ENCODE measurements at regions of chr17 and their contacts with region 1.

Region 1: DNA sequence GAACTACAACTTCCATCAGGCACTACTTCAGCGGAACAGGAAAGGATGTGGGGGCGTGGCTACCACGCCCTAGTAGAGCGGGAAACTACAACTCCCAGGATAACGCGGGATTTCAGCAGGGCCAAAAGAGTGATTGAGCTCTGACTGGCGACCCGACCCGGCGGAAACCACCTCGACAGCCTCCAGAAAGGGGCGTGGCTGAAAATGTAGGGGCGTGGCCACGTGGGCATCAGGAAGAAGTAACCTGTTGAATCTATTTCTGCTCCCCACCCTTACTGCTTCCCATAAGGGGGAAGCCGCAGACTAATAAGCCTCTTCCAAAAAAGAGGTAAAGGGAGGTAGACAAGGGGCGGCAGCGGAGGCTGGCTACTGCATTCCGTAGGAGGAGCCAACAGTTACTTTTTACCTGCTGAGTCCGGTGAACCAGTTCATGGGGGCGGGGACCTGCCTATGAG is at the start of gene TMEM102:
- DNase-seq: peak; percentile 93 to 96
- ATAC-seq: peak; percentile 76 to 92 (median 88)
- H3K4me3 ChIP-seq: peak within 1 kb of the TSS; percentile 16 to 66 (median 51)
- H3K27ac ChIP-seq: peak within 1 kb of the TSS in 9 of 10 donors; percentile 14 to 78 (median 57)
- H3K4me1 ChIP-seq: peaks cover 24 to 56% (median 46%) of the 10 kb centered on the region in 9 donors
- H3K27me3 ChIP-seq: peaks cover 0 to 23% (median 6%) of the 10 kb centered on the region in 7 donors
- CTCF ChIP-seq: no peak
- total RNA-seq, gene TMEM102: 1.2 to 3.5 (median 2.2) TPM

Region 2: GRCh38 chr17:7454980-7455379 is 19.7 kb after region 1 on chr17:
- intact Hi-C with region 1: loop called in 1 of 10 experiments (anchors 1 kb)
- DNase-seq: no peak
- ATAC-seq: peak in 1 of 8 donors; percentile 6
- H3K4me3 ChIP-seq: peak overlapping the region in 8 of 10 donors; percentile 51 to 93 (median 80)
- H3K27ac ChIP-seq: peak overlapping the region in 4 of 10 donors; percentile 80 to 89 (median 82)
- H3K4me1 ChIP-seq: peaks cover 0 to 13% (median 0%) of the 10 kb centered on the region in 9 donors
- H3K27me3 ChIP-seq: no peaks in the 10 kb centered on the region
- CTCF ChIP-seq: no peak

Region 3: GRCh38 chr17:7484067-7484918 is 49.0 kb after region 1 on chr17 and contains the start of gene POLR2A:
- intact Hi-C with region 1: loop called in 8 of 10 experiments (anchors 1 to 5 kb)
- DNase-seq: peak; percentile 98 to 99
- ATAC-seq: peak; percentile 84 to 93 (median 88)
- H3K4me3 ChIP-seq: peak within 1 kb of the TSS; percentile 55 to 87 (median 68)
- H3K27ac ChIP-seq: peak within 1 kb of the TSS; percentile 91 to 100 (median 100)
- H3K4me1 ChIP-seq: peaks cover 22 to 78% (median 60%) of the 10 kb centered on the region in 9 donors
- H3K27me3 ChIP-seq: no peaks in the 10 kb centered on the region
- CTCF ChIP-seq: no peak
- total RNA-seq, gene POLR2A: 40.5 to 61.7 (median 48.8) TPM

Region 4: GRCh38 chr17:7583253-7584109 is 148.2 kb after region 1 on chr17 and contains the start of gene MPDU1:
- intact Hi-C with region 1: loop called in 2 of 10 experiments (anchors 5 to 10 kb)
- DNase-seq: peak; percentile 97
- ATAC-seq: peak; percentile 81 to 96 (median 90)
- H3K4me3 ChIP-seq: peak within 1 kb of the TSS; percentile 10 to 75 (median 66)
- H3K27ac ChIP-seq: peak within 1 kb of the TSS; percentile 90 to 97 (median 94)
- H3K4me1 ChIP-seq: peaks cover 9 to 76% (median 48%) of the 10 kb centered on the region in 9 donors
- H3K27me3 ChIP-seq: no peaks in the 10 kb centered on the region
- CTCF ChIP-seq: no peak
- total RNA-seq, gene MPDU1: 20.1 to 39.8 (median 23.5) TPM

Region 5: DNA sequence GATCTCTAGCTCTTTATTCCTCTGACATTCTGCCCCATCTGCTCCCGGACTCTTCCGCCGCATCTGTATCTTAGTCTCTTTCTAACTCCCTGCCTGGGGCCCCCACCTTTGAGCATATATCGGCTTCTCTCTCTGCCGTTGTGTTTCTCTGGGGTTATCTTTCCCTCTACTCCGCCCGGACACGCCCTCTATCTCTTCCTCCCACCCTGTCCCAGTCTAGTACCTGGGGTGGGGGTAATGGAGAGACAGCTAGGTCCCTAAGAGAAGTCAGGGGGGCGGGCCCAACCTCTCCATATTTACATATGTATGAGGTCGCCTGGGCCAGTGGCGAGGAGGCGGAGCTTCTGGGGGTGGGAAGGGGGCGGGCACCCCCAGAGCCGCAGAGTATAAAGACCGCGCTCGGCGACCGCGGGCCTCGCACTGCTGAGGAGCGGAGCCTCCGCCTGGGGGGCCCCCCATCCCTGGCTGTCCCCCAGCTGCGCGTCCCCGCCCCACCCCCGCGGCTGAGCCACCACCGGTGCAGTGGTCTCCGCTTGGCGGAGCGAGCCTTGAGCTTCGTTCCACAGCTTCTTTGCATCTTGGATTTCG is 215.4 kb after region 1 on chr17 and contains the start of gene ATP1B2:
- intact Hi-C with region 1: no loop called
- DNase-seq: peak; percentile 68 to 76
- ATAC-seq: peak; percentile 72 to 90 (median 84)
- H3K4me3 ChIP-seq: peak within 1 kb of the TSS; percentile 8 to 66 (median 58)
- H3K27ac ChIP-seq: peak within 1 kb of the TSS; percentile 47 to 78 (median 62)
- H3K4me1 ChIP-seq: peaks cover 6 to 23% (median 19%) of the 10 kb centered on the region in 9 donors
- H3K27me3 ChIP-seq: peaks cover 5 to 50% (median 37%) of the 10 kb centered on the region in 7 donors
- CTCF ChIP-seq: no peak
- total RNA-seq, gene ATP1B2: 1.4 to 6.5 (median 3.9) TPM

Measured in heart right ventricle (tissue), 16 donors.